ENCODE measurements at regions of chr17 and their contacts with region 1.

Region 1: DNA sequence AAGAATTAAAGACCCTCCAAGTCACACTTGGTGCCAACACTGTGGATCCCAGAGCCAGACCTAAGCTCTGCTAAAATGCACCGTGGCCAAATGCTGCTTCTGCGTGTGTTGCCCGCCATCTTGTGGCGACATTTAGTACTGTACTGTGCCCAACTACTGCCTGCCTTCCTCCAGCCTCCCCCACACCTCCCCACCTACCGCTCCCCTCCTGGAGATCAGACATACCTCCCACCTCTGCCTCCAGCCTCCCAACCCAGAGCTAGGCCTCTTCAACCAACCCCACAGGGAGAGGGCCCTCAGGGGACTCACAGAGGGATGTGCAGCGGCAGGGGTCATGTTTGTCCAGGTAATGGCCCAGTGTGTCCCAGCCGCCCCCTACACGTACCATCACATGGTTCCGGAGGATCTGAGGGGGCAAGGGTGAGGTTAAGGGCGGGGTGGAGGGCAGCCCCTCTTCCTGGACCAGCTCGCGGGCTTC is 5.5 kb downstream of the GAS2L2 start:
- H3K4me3 Mint-ChIP-seq: no peak overlapping the region
- H3K27ac Mint-ChIP-seq: no peak overlapping the region
- H3K4me1 Mint-ChIP-seq: peaks cover 21% of the 10 kb centered on the region
- H3K27me3 Mint-ChIP-seq: peaks cover 57% of the 10 kb centered on the region

Region 2: GRCh38 chr17:35612924-35613521 is 134.6 kb before region 1 on chr17:
- intact Hi-C with region 1: loop called (anchors 1 kb)
- H3K4me3 Mint-ChIP-seq: no peak overlapping the region
- H3K27ac Mint-ChIP-seq: no peak overlapping the region
- H3K4me1 Mint-ChIP-seq: no peaks in the 10 kb centered on the region
- H3K27me3 Mint-ChIP-seq: no peaks in the 10 kb centered on the region